Sciatic nerve (tissue), 2 donors: ENCODE measurements at regions of chr19 and their contacts with region 1.

Region 1: DNA sequence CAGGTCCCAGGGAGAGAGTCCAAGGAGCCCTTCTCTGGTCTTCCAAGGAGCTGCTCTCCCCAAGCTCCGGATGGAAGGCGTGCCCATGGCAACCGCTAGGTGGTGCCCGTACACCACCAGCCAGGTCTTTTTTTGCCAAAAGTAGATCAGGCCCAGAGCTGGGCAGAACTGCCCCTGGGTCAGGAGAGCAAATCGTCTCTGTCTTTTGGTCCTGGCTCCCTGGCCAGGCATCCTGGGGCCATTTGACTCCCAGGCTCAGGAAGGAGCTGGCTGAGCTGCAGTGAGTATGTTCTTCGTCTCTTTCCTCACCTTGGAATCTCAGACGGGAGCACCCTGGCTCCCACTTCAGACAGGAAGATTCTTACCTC is 24.6 kb upstream of the BCL3 start:
- DNase-seq: peak; percentile 90
- ATAC-seq: peak; percentile 91

Region 2: GRCh38 chr19:44767295-44768180 is 43.6 kb after region 1 on chr19:
- intact Hi-C with region 1: loop called (anchors 2 kb)
- DNase-seq: no peak
- ATAC-seq: no peak

Region 3: GRCh38 chr19:44856421-44857083 is 132.6 kb after region 1 on chr19:
- intact Hi-C with region 1: loop called (anchors 10 kb)
- DNase-seq: no peak
- ATAC-seq: peak; percentile 82